ENCODE measurements at regions of chr14 and their contacts with region 1.

Region 1: GRCh38 chr14:34671716-34672115 is 41.8 kb upstream of the SNX6 start:
- DNase-seq: no peak
- H3K4me3 ChIP-seq: no peak overlapping the region
- H3K27ac ChIP-seq: no peak overlapping the region
- H3K4me1 ChIP-seq: no peaks in the 10 kb centered on the region
- H3K27me3 ChIP-seq: no peaks in the 10 kb centered on the region
- CTCF ChIP-seq: no peak

Region 2: GRCh38 chr14:34722717-34723545 is 51.2 kb after region 1 on chr14:
- intact Hi-C with region 1: loop called (anchors 2 kb)
- DNase-seq: peak in 1 of 2 donors; percentile 38
- H3K4me3 ChIP-seq: no peak overlapping the region
- H3K27ac ChIP-seq: peak overlapping the region; percentile 35 to 47
- H3K4me1 ChIP-seq: peaks cover 0 to 9% (median 4%) of the 10 kb centered on the region in 4 donors
- H3K27me3 ChIP-seq: no peaks in the 10 kb centered on the region
- CTCF ChIP-seq: peak; percentile 85 to 87

Measured in tibial artery (tissue), 4 donors.